Natural killer cell (primary cell): ENCODE measurements at regions of chr10 and their contacts with region 1.

Region 1: GRCh38 chr10:119686439-119687191 is 35.4 kb downstream of the BAG3 start:
- DNase-seq: peak; percentile 67 to 92
- ATAC-seq: peak; percentile 88 to 90 (median 90)
- H3K4me3 ChIP-seq: peak overlapping the region; percentile 14
- H3K4me3 Mint-ChIP-seq: peak overlapping the region; percentile 80
- H3K27ac ChIP-seq: peak overlapping the region; percentile 14
- H3K27ac Mint-ChIP-seq: peak overlapping the region; percentile 72 to 85
- H3K4me1 ChIP-seq: peaks cover 23% of the 10 kb centered on the region
- H3K4me1 Mint-ChIP-seq: peaks cover 30 to 37% of the 10 kb centered on the region in 2 donors
- H3K27me3 ChIP-seq: no peaks in the 10 kb centered on the region
- H3K27me3 Mint-ChIP-seq: peaks cover 0 to 5% of the 10 kb centered on the region in 2 donors
- CTCF ChIP-seq: peak; percentile 97

Region 2: GRCh38 chr10:119725828-119726675 is 39.4 kb after region 1 on chr10 and contains the start of gene INPP5F:
- intact Hi-C with region 1: loop called (anchors 1 kb)
- DNase-seq: peak; percentile 91 to 98
- ATAC-seq: peak; percentile 93 to 98 (median 94)
- H3K4me3 ChIP-seq: peak within 1 kb of the TSS; percentile 45
- H3K4me3 Mint-ChIP-seq: peak within 1 kb of the TSS; percentile 92
- H3K27ac ChIP-seq: peak within 1 kb of the TSS; percentile 84
- H3K27ac Mint-ChIP-seq: peak within 1 kb of the TSS; percentile 24 to 80
- H3K4me1 ChIP-seq: peaks cover 18% of the 10 kb centered on the region
- H3K4me1 Mint-ChIP-seq: peaks cover 30 to 34% of the 10 kb centered on the region in 2 donors
- H3K27me3 ChIP-seq: no peaks in the 10 kb centered on the region
- H3K27me3 Mint-ChIP-seq: no peaks in the 10 kb centered on the region
- CTCF ChIP-seq: peak; percentile 17
- total RNA-seq, gene INPP5F: 12.8 to 18.2 (median 15.8) TPM

Region 3: GRCh38 chr10:119750391-119751230 is 64.0 kb after region 1 on chr10:
- intact Hi-C with region 1: loop called (anchors 1 kb)
- DNase-seq: peak; percentile 35 to 77
- ATAC-seq: peak; percentile 91 to 100 (median 99)
- H3K4me3 ChIP-seq: no peak overlapping the region
- H3K4me3 Mint-ChIP-seq: no peak overlapping the region
- H3K27ac ChIP-seq: no peak overlapping the region
- H3K27ac Mint-ChIP-seq: peak overlapping the region in 1 of 2 donors; percentile 0
- H3K4me1 ChIP-seq: no peaks in the 10 kb centered on the region
- H3K4me1 Mint-ChIP-seq: peaks cover 6 to 11% of the 10 kb centered on the region in 2 donors
- H3K27me3 ChIP-seq: no peaks in the 10 kb centered on the region
- H3K27me3 Mint-ChIP-seq: no peaks in the 10 kb centered on the region
- CTCF ChIP-seq: peak; percentile 80

Region 4: DNA sequence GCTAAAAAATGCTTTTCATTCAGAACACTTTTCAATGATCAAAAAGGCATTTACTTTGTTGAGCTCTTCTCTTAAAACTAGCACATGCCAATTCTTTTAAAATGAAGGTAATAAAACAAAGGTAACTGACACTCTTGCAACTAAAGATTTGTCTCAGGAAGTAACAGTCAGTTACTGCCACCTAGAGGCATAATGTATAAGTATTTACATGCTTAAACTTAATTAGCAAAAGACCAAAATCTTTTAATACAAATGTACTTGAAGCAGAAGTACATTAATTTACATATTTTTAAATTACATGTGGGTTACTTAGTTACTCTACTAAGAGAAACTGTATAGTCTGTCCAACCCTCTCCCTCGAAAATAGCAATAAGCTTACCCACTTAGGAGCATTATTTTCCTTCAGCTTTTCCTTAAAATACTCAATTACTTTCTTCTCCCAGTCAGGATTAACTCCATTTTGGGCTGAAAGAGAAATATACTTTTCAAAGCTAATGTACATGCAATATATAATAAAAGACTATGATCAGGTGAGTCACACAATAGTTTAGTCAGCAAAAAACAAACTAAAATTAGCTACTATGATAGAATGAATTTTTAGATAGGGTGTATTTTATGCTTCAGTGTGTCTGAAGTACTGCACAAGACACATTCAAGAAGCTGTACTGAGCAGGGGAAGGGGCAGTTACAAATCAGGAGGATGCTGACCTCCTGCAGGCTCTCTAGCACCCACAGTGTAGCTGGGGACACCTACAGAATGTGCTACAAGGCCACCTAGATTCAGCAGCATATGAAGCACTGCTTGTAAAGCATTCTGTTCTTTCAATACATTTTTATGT is 173.0 kb after region 1 on chr10:
- intact Hi-C with region 1: loop called (anchors 1 kb)
- DNase-seq: peak in 1 of 2 donors; percentile 74
- ATAC-seq: peak; percentile 62 to 65 (median 62)
- H3K4me3 ChIP-seq: no peak overlapping the region
- H3K4me3 Mint-ChIP-seq: no peak overlapping the region
- H3K27ac ChIP-seq: no peak overlapping the region
- H3K27ac Mint-ChIP-seq: peak overlapping the region; percentile 39 to 45
- H3K4me1 ChIP-seq: no peaks in the 10 kb centered on the region
- H3K4me1 Mint-ChIP-seq: peaks cover 37 to 42% of the 10 kb centered on the region in 2 donors
- H3K27me3 ChIP-seq: no peaks in the 10 kb centered on the region
- H3K27me3 Mint-ChIP-seq: no peaks in the 10 kb centered on the region
- CTCF ChIP-seq: peak; percentile 87

Region 5: GRCh38 chr10:119872860-119873681 is 186.5 kb after region 1 on chr10:
- intact Hi-C with region 1: loop called (anchors 5 kb)
- DNase-seq: peak; percentile 83 to 96
- ATAC-seq: peak; percentile 92 to 98 (median 94)
- H3K4me3 ChIP-seq: peak overlapping the region; percentile 72
- H3K4me3 Mint-ChIP-seq: peak overlapping the region; percentile 92
- H3K27ac ChIP-seq: peak overlapping the region; percentile 65
- H3K27ac Mint-ChIP-seq: peak overlapping the region; percentile 83 to 91
- H3K4me1 ChIP-seq: peaks cover 17% of the 10 kb centered on the region
- H3K4me1 Mint-ChIP-seq: peaks cover 32 to 38% of the 10 kb centered on the region in 2 donors
- H3K27me3 ChIP-seq: no peaks in the 10 kb centered on the region
- H3K27me3 Mint-ChIP-seq: no peaks in the 10 kb centered on the region
- CTCF ChIP-seq: no peak